CD4-positive, alpha-beta T cell (primary cell): ENCODE measurements at regions of chr19 and their contacts with region 1.

Region 1: GRCh38 chr19:1275260-1275975 is at the start of gene FAM174C:
- DNase-seq: peak; percentile 88 to 99 (median 95)
- ATAC-seq: peak; percentile 74
- H3K4me3 ChIP-seq: peak within 1 kb of the TSS; percentile 91
- H3K4me3 Mint-ChIP-seq: peak within 1 kb of the TSS; percentile 94
- H3K27ac ChIP-seq: peak within 1 kb of the TSS; percentile 80 to 96
- H3K27ac Mint-ChIP-seq: peak within 1 kb of the TSS; percentile 96
- H3K4me1 ChIP-seq: peaks cover 75% of the 10 kb centered on the region
- H3K4me1 Mint-ChIP-seq: peaks cover 58% of the 10 kb centered on the region
- H3K27me3 ChIP-seq: no peaks in the 10 kb centered on the region
- H3K27me3 Mint-ChIP-seq: no peaks in the 10 kb centered on the region
- CTCF ChIP-seq: no peak
- total RNA-seq, gene FAM174C: 32.0 to 38.3 TPM

Region 2: GRCh38 chr19:1249298-1249989 is 26.0 kb before region 1 on chr19:
- CTCF ChIA-PET with region 1: interaction called, 26 read pairs
- POLR2A ChIA-PET with region 1: interaction called, 23 read pairs
- intact Hi-C with region 1: no loop called
- DNase-seq: peak; percentile 90 to 99 (median 96)
- ATAC-seq: peak; percentile 55
- H3K4me3 ChIP-seq: peak overlapping the region; percentile 71
- H3K4me3 Mint-ChIP-seq: peak overlapping the region; percentile 97
- H3K27ac ChIP-seq: peak overlapping the region; percentile 69 to 86
- H3K27ac Mint-ChIP-seq: peak overlapping the region; percentile 92
- H3K4me1 ChIP-seq: peaks cover 55% of the 10 kb centered on the region
- H3K4me1 Mint-ChIP-seq: peaks cover 10% of the 10 kb centered on the region
- H3K27me3 ChIP-seq: no peaks in the 10 kb centered on the region
- H3K27me3 Mint-ChIP-seq: no peaks in the 10 kb centered on the region
- CTCF ChIP-seq: no peak

Region 3: GRCh38 chr19:1354977-1355567 is 79.7 kb after region 1 on chr19:
- CTCF ChIA-PET with region 1: interaction called, 3 read pairs
- POLR2A ChIA-PET with region 1: interaction called, 6 read pairs
- intact Hi-C with region 1: loop called in 1 of 2 experiments (anchors 5 kb)
- DNase-seq: peak in 1 of 14 experiments; percentile 13
- ATAC-seq: peak; percentile 57
- H3K4me3 ChIP-seq: peak overlapping the region; percentile 75
- H3K4me3 Mint-ChIP-seq: peak overlapping the region; percentile 83
- H3K27ac ChIP-seq: no peak overlapping the region
- H3K27ac Mint-ChIP-seq: peak overlapping the region; percentile 29
- H3K4me1 ChIP-seq: peaks cover 20% of the 10 kb centered on the region
- H3K4me1 Mint-ChIP-seq: peaks cover 17% of the 10 kb centered on the region
- H3K27me3 ChIP-seq: no peaks in the 10 kb centered on the region
- H3K27me3 Mint-ChIP-seq: no peaks in the 10 kb centered on the region
- CTCF ChIP-seq: no peak

Region 4: GRCh38 chr19:1383311-1384084 is 108.1 kb after region 1 on chr19 and contains the start of gene NDUFS7:
- CTCF ChIA-PET with region 1: interaction called, 3 read pairs
- POLR2A ChIA-PET with region 1: interaction called, 10 read pairs
- intact Hi-C with region 1: no loop called
- DNase-seq: peak; percentile 85 to 100 (median 94)
- ATAC-seq: peak; percentile 90
- H3K4me3 ChIP-seq: peak within 1 kb of the TSS; percentile 92
- H3K4me3 Mint-ChIP-seq: peak within 1 kb of the TSS; percentile 97
- H3K27ac ChIP-seq: peak within 1 kb of the TSS; percentile 70 to 87
- H3K27ac Mint-ChIP-seq: peak within 1 kb of the TSS; percentile 98
- H3K4me1 ChIP-seq: peaks cover 34% of the 10 kb centered on the region
- H3K4me1 Mint-ChIP-seq: peaks cover 19% of the 10 kb centered on the region
- H3K27me3 ChIP-seq: no peaks in the 10 kb centered on the region
- H3K27me3 Mint-ChIP-seq: peaks cover 11% of the 10 kb centered on the region
- CTCF ChIP-seq: no peak
- total RNA-seq, gene NDUFS7: 40.0 to 42.6 TPM

Region 5: DNA sequence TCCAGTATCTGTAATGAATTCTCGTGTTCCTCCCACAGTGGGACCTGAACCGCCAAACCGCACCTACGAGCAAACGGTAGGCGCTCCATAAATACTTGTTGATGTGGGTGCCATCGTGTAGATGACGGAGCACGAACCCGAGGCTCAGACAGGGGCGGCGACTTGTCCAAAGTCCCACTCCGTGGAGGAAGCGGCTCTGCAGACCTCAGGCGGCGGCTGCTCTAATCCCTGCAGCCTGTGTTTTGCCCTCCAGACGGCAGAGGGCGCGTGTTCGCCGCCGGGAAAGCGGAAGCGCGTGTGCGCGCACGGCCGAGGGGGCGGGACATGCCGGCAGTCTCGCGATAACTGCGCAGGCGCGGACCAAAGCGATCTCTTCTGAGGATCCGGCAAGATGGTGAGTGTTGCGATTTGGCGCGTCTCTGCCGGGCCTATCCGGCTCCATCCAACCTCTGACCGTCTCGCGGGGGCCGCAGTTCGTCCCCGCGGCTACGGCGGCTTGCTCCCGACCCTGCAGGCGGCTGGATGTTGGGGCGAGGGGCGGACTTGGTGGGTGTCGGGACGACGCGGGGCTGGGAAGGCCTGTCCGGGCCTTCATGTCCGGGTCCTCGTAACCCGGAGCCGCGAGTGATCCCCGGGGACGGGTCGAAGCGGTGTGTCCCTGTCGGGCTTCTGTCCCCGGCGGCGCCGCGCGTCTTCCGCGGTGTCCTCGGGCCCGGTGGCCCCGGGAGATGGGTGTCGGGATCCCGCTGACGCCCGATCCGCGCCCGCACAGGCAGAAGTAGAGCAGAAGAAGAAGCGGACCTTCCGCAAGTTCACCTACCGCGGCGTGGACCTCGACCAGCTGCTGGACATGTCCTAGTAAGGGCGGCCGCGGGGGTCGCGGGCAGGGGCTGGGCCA is 162.9 kb after region 1 on chr19 and contains the start of gene RPS15:
- CTCF ChIA-PET with region 1: no interaction called
- POLR2A ChIA-PET with region 1: no interaction called
- intact Hi-C with region 1: loop called in 1 of 2 experiments (anchors 5 kb)
- DNase-seq: peak; percentile 93 to 99 (median 96)
- ATAC-seq: peak; percentile 88
- H3K4me3 ChIP-seq: peak within 1 kb of the TSS; percentile 96
- H3K4me3 Mint-ChIP-seq: peak within 1 kb of the TSS; percentile 100
- H3K27ac ChIP-seq: peak within 1 kb of the TSS; percentile 83 to 90
- H3K27ac Mint-ChIP-seq: peak within 1 kb of the TSS; percentile 92
- H3K4me1 ChIP-seq: peaks cover 32% of the 10 kb centered on the region
- H3K4me1 Mint-ChIP-seq: peaks cover 25% of the 10 kb centered on the region
- H3K27me3 ChIP-seq: no peaks in the 10 kb centered on the region
- H3K27me3 Mint-ChIP-seq: no peaks in the 10 kb centered on the region
- CTCF ChIP-seq: peak; percentile 97
- total RNA-seq, gene RPS15: 2,193 to 2,200 TPM

Region 6: DNA sequence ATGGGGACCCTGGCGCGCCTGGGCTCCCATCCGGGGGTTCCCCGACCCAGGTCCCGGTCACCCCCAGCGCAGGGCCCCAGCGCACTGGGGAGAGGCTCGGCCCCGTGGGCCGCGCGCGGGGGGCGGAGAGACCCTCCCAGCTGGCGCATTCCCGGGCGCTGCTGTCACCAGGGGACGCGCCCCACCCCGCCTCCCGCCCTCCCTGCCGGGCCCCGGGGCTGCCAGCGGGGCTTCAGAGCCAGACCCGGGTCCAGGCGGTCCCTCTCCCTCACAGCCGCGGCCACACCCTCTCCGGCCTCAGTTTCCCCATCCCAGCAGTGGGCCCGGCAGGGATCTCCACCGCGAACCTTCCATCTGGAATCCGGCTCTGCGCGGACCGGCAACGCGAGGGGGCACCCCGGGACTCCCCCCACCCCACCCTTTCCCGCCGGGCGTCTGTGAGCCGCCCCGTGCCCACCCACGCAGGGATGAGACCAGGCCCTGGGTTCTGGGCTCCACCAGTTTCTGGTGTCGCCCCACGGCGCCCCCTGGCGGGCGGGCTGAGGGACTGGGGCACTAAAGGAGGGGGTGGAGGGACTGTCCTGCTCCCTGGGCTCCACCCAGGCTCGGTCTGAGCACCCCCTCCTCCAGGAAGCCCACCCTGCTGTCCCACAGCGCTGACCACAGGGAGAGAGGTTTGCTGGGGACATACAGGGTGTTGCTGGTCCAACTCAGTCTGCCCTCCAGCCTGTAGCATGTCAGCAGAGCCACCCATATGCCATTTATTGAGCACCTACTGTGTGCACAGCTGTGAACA is 238.3 kb after region 1 on chr19:
- CTCF ChIA-PET with region 1: no interaction called
- POLR2A ChIA-PET with region 1: no interaction called
- intact Hi-C with region 1: loop called in 1 of 2 experiments (anchors 1 kb)
- DNase-seq: peak; percentile 53 to 83 (median 64)
- ATAC-seq: peak; percentile 70
- H3K4me3 ChIP-seq: peak overlapping the region; percentile 25
- H3K4me3 Mint-ChIP-seq: peak overlapping the region; percentile 34
- H3K27ac ChIP-seq: no peak overlapping the region
- H3K27ac Mint-ChIP-seq: no peak overlapping the region
- H3K4me1 ChIP-seq: peaks cover 26% of the 10 kb centered on the region
- H3K4me1 Mint-ChIP-seq: peaks cover 13% of the 10 kb centered on the region
- H3K27me3 ChIP-seq: no peaks in the 10 kb centered on the region
- H3K27me3 Mint-ChIP-seq: peaks cover 13% of the 10 kb centered on the region
- CTCF ChIP-seq: peak; percentile 63